Activated T-helper 1 cell treated with anti-CD3 and anti-CD28 coated beads, Interleukin-12 subunit alpha, Interleukin-12 subunit beta, Interleukin-2, Interleukin-4 antibody, amounts not matched to agents 30 ng/mL and 10 ng/mL and 1 ng/mL, durations not matched to agents 14 hours and 24 hours and 36 hours (primary cell): ENCODE measurements at regions of chr3 and their contacts with region 1.

Region 1: DNA sequence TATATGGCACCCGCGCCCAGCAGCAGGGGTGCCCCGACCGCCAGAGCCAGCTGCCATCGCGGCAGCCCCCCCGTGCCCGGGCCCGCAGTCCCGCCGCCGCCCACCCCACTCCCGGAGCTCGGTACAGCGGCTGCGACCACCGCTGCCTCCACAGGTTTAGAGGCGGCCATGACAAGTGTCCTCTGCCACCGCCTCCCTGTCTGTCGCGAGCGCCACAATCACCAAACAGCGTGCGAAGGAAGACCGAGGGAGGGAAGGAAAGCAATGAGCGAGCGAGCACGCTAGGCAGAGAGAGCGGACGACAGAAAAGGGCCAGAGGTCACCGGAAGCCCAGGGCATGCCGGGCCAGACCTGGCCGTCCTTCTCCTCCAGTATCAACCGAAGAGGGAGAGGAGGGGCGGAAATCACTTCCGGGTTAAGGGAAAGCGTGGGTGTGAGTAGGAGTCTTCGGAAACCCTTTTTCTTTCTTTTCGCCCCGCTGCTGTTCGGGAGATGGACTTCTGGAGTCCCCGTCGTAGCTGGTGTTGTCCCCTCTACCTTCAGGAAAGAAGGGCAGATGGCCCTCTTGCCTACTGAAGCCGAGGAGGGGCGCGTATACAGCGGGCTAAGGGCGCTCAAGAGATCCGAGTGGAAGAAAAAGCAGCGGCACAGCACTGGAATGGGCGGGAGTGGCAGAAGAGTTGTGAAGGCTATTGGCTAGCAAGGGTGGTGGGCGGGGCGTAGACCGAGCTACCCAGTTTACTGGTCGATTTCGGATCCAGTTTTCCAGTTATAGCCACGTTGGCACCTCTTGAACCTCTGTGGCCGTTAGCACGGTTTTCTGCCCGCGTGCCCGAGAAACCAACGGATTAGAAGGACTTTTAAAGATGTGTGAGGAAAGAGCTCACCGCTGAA is at the starts of genes LNP1 and TOMM70:
- DNase-seq: peak; percentile 91
- H3K4me3 Mint-ChIP-seq: peak within 1 kb of the TSS; percentile 96
- H3K27ac Mint-ChIP-seq: peak within 1 kb of the TSS; percentile 99
- H3K4me1 Mint-ChIP-seq: peaks cover 60% of the 10 kb centered on the region
- H3K27me3 Mint-ChIP-seq: peaks cover 2% of the 10 kb centered on the region
- total RNA-seq, gene LNP1: 2.4 and 2.6 TPM in 2 replicates
- total RNA-seq, gene TOMM70: 60.0 and 62.9 TPM in 2 replicates

Region 2: GRCh38 chr3:99833617-99834205 is 567.3 kb before region 1 on chr3:
- intact Hi-C with region 1: loop called (anchors 5 kb)
- DNase-seq: no peak
- H3K4me3 Mint-ChIP-seq: no peak overlapping the region
- H3K27ac Mint-ChIP-seq: no peak overlapping the region
- H3K4me1 Mint-ChIP-seq: peaks cover 12% of the 10 kb centered on the region
- H3K27me3 Mint-ChIP-seq: no peaks in the 10 kb centered on the region

Region 3: GRCh38 chr3:100087198-100087597 is 313.8 kb before region 1 on chr3:
- intact Hi-C with region 1: no loop called
- DNase-seq: no peak
- H3K4me3 Mint-ChIP-seq: no peak overlapping the region
- H3K27ac Mint-ChIP-seq: peak overlapping the region; percentile 87
- H3K4me1 Mint-ChIP-seq: peaks cover 55% of the 10 kb centered on the region
- H3K27me3 Mint-ChIP-seq: peaks cover 3% of the 10 kb centered on the region

Region 4: DNA sequence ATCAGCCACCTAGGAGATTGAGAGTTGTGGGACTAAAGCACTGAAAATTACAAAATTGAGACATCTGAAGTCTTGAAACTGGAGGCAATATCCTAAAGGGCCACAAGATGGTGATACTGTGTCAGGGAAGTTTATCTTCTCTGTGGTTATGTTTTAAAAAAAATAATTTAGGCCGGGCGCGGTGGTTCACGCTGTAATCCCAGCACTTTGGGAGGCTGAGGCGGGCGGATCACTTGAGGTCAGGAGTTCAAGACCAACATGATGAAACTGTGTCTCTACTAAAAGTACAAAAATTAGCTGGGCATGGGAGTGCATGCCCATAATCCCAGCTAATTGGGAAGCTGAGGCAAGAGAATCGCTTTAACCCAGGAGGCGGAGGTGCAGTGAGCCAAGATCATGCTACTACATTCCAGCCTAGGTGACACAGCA is 84.4 kb before region 1 on chr3:
- intact Hi-C with region 1: loop called (anchors 2 kb)
- DNase-seq: peak; percentile 28
- H3K4me3 Mint-ChIP-seq: no peak overlapping the region
- H3K27ac Mint-ChIP-seq: peak overlapping the region; percentile 18
- H3K4me1 Mint-ChIP-seq: peaks cover 15% of the 10 kb centered on the region
- H3K27me3 Mint-ChIP-seq: no peaks in the 10 kb centered on the region

Region 5: GRCh38 chr3:100437721-100438622 is 36.9 kb after region 1 on chr3:
- intact Hi-C with region 1: no loop called
- DNase-seq: no peak
- H3K4me3 Mint-ChIP-seq: no peak overlapping the region
- H3K27ac Mint-ChIP-seq: no peak overlapping the region
- H3K4me1 Mint-ChIP-seq: peaks cover 9% of the 10 kb centered on the region
- H3K27me3 Mint-ChIP-seq: no peaks in the 10 kb centered on the region

Region 6: GRCh38 chr3:100590114-100590839 is 189.2 kb after region 1 on chr3:
- intact Hi-C with region 1: loop called (anchors 1 kb)
- DNase-seq: peak; percentile 53
- H3K4me3 Mint-ChIP-seq: no peak overlapping the region
- H3K27ac Mint-ChIP-seq: no peak overlapping the region
- H3K4me1 Mint-ChIP-seq: peaks cover 9% of the 10 kb centered on the region
- H3K27me3 Mint-ChIP-seq: peaks cover 4% of the 10 kb centered on the region

Region 7: GRCh38 chr3:101676765-101677435 is 1275.9 kb after region 1 on chr3 and contains the start of gene ZBTB11:
- intact Hi-C with region 1: loop called (anchors 2 kb)
- DNase-seq: peak; percentile 99
- H3K4me3 Mint-ChIP-seq: peak within 1 kb of the TSS; percentile 96
- H3K27ac Mint-ChIP-seq: peak within 1 kb of the TSS; percentile 97
- H3K4me1 Mint-ChIP-seq: peaks cover 56% of the 10 kb centered on the region
- H3K27me3 Mint-ChIP-seq: no peaks in the 10 kb centered on the region
- total RNA-seq, gene ZBTB11: 29.0 and 31.9 TPM in 2 replicates